ENCODE measurements at regions of chr1 and their contacts with region 1.

Region 1: GRCh38 chr1:6554031-6554906 is at the start of gene NOL9:
- DNase-seq: peak; percentile 97
- ATAC-seq: peak; percentile 98
- H3K4me3 Mint-ChIP-seq: peak within 1 kb of the TSS; percentile 82
- H3K27ac Mint-ChIP-seq: peak within 1 kb of the TSS; percentile 55
- H3K4me1 Mint-ChIP-seq: peaks cover 19% of the 10 kb centered on the region
- H3K27me3 Mint-ChIP-seq: no peaks in the 10 kb centered on the region
- total RNA-seq, gene NOL9: 37.4 to 44.7 TPM

Region 2: DNA sequence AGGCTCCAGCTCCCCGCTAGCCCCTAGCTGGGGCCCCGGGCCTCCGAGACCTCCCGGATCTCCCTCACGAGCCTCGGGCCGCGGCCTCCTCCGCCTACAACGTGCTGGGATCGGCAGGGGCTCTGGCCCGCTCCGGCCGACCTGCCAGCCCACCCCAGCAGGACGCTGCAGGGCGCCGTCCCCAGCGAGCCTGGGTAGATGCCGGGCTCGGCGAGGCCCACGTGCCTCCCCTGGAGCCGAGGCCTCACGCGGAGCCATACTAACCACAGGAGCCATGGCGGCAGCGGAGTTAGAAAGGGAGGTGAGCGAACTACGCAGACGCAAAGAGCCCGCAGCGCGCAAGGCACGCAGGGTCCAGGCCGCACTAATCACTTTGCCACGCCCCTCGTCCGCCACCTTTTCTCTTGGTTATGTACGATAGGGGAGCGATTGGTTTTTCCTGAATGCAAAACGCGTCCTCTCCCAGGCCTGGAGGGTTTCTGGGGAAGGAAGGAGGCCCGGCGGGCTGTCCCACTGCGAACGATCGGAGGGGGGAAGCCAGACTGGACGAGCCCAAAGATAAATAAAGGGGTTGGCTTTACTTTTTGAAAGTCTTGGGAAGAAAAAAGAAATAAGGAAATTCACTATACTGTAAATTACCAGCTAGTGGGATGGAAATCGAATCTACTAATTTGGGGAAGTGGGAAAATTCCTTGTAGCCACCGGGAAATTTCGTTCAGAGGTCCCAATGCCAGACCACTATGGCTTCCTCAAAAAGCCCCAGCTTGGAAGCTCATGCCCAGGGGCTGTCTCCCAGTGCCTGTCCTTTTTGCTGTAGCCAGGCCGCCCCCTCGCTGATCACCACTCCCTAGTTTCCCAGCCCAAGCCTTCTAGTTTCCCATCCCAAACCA is 354.7 kb before region 1 on chr1 and contains the start of gene RPL22:
- CTCF ChIA-PET with region 1: interaction called, 3 read pairs
- POLR2A ChIA-PET with region 1: no interaction called
- intact Hi-C with region 1: loop called in 1 of 2 experiments (anchors 1 kb)
- DNase-seq: peak; percentile 99
- ATAC-seq: peak; percentile 99
- H3K4me3 Mint-ChIP-seq: peak within 1 kb of the TSS; percentile 99
- H3K27ac Mint-ChIP-seq: peak within 1 kb of the TSS; percentile 96
- H3K4me1 Mint-ChIP-seq: peaks cover 39% of the 10 kb centered on the region
- H3K27me3 Mint-ChIP-seq: no peaks in the 10 kb centered on the region
- total RNA-seq, gene RPL22: 392 to 475 TPM

Region 3: GRCh38 chr1:6359216-6360116 is 194.8 kb before region 1 on chr1:
- CTCF ChIA-PET with region 1: no interaction called
- POLR2A ChIA-PET with region 1: no interaction called
- intact Hi-C with region 1: loop called in 1 of 2 experiments (anchors 5 kb)
- DNase-seq: peak; percentile 76
- ATAC-seq: peak; percentile 83
- H3K4me3 Mint-ChIP-seq: peak overlapping the region; percentile 57
- H3K27ac Mint-ChIP-seq: peak overlapping the region; percentile 86
- H3K4me1 Mint-ChIP-seq: peaks cover 55% of the 10 kb centered on the region
- H3K27me3 Mint-ChIP-seq: no peaks in the 10 kb centered on the region

Region 4: DNA sequence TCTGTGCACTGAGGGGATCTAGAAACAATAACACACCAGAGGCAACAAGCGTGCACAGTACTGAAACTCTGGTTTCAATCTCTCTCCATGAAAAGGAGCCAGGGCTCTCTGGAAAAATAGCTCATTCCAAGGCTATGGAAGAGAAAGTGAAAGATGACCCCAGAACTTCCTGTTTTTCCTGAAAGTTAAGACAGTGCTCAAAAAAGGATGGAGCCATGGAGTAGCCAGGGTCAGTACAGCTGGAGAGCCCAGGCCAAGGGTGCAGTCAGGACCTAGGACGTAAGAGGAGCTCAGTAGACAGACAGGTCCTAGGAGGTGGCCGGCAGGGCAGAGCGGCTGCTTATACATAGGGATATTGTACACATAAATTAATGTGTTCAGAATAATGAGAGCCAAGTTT is 19.1 kb before region 1 on chr1:
- CTCF ChIA-PET with region 1: interaction called, 21 read pairs
- POLR2A ChIA-PET with region 1: no interaction called
- intact Hi-C with region 1: no loop called
- DNase-seq: no peak
- ATAC-seq: no peak
- H3K4me3 Mint-ChIP-seq: no peak overlapping the region
- H3K27ac Mint-ChIP-seq: no peak overlapping the region
- H3K4me1 Mint-ChIP-seq: no peaks in the 10 kb centered on the region
- H3K27me3 Mint-ChIP-seq: no peaks in the 10 kb centered on the region

Region 5: GRCh38 chr1:6613361-6614018 is 59.2 kb after region 1 on chr1 and contains the start of gene PHF13:
- CTCF ChIA-PET with region 1: no interaction called
- POLR2A ChIA-PET with region 1: interaction called, 6 read pairs
- intact Hi-C with region 1: loop called (anchors 1 to 10 kb)
- DNase-seq: peak; percentile 100
- ATAC-seq: peak; percentile 98
- H3K4me3 Mint-ChIP-seq: peak within 1 kb of the TSS; percentile 80
- H3K27ac Mint-ChIP-seq: peak within 1 kb of the TSS; percentile 87
- H3K4me1 Mint-ChIP-seq: peaks cover 20% of the 10 kb centered on the region
- H3K27me3 Mint-ChIP-seq: no peaks in the 10 kb centered on the region
- total RNA-seq, gene PHF13: 13.2 to 13.6 TPM

Region 6: GRCh38 chr1:6646499-6647148 is 92.4 kb after region 1 on chr1:
- CTCF ChIA-PET with region 1: interaction called, 8 read pairs
- POLR2A ChIA-PET with region 1: no interaction called
- intact Hi-C with region 1: loop called in 1 of 2 experiments (anchors 1 kb)
- DNase-seq: peak; percentile 41
- ATAC-seq: peak; percentile 51
- H3K4me3 Mint-ChIP-seq: no peak overlapping the region
- H3K27ac Mint-ChIP-seq: no peak overlapping the region
- H3K4me1 Mint-ChIP-seq: no peaks in the 10 kb centered on the region
- H3K27me3 Mint-ChIP-seq: no peaks in the 10 kb centered on the region